Mammary epithelial cell (primary cell): ENCODE measurements at regions of chr9 and their contacts with region 1.

Region 1: DNA sequence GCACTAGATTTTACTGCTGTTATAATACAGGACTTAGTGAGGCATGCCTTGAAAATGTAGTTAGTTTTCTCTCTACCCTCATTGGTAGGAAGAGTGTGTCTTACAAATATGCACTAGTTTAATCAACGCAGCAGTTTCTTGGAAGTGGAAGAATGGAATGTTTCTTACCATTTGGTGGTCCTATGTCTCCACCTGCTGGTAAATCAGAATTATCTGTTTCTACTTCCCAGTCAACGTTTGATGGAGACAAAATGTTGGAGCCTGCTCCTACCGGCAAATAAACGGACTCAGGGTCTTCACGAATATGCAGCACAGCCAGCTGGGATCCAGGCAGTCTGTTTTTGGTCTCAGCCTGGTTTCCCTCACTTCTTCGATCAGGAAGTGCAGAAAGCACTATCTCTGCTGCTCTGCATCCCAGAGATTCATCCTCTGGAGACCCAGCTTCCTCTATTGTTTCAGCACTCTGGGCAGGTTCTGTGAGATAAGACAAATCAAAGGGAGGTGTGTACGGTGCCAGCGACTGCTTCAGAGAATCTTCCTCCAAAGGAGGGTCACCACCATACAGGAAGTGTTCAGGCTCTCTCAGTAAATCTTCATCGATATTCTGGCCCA is 59.5 kb upstream of the PCA3 start:
- DNase-seq: peak; percentile 60
- H3K4me3 ChIP-seq: no peak overlapping the region
- H3K27ac ChIP-seq: no peak overlapping the region
- H3K4me1 ChIP-seq: no peaks in the 10 kb centered on the region
- H3K27me3 ChIP-seq: peaks cover 3% of the 10 kb centered on the region
- CTCF ChIP-seq: peak; percentile 52 to 61

Region 2: DNA sequence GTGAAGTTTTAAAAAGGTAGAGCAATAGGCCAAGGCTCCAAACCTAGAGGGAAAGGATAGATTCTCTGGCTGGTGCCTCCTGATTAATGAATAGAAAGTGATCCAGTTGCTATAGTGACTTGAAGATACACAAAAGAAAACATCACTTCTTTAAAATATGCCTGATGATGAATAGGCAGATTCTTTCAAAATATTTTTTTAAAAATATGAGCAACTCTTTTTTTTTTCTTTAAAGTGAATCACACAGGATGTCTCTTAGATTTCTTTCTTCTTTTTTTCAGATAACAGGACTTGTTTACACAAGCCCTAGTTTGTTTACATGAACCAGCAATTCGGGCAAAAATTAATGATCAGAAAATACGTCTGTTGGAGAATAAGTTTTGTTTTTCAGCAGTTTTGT is 434.9 kb before region 1 on chr9:
- CTCF ChIA-PET with region 1: no interaction called
- dilution Hi-C with region 1: no loop called
- in situ Hi-C with region 1: no loop called
- intact Hi-C with region 1: no loop called
- DNase-seq: peak; percentile 54
- H3K4me3 ChIP-seq: no peak overlapping the region
- H3K27ac ChIP-seq: no peak overlapping the region
- H3K4me1 ChIP-seq: no peaks in the 10 kb centered on the region
- H3K27me3 ChIP-seq: no peaks in the 10 kb centered on the region
- CTCF ChIP-seq: no peak

Region 3: GRCh38 chr9:76403352-76403751 is 301.3 kb before region 1 on chr9:
- CTCF ChIA-PET with region 1: no interaction called
- dilution Hi-C with region 1: no loop called
- in situ Hi-C with region 1: no loop called
- intact Hi-C with region 1: loop called (anchors 1 kb)
- DNase-seq: peak; percentile 69
- H3K4me3 ChIP-seq: peak overlapping the region in 2 of 3 experiments; percentile 1 to 17
- H3K27ac ChIP-seq: peak overlapping the region; percentile 1
- H3K4me1 ChIP-seq: peaks cover 3% of the 10 kb centered on the region
- H3K27me3 ChIP-seq: no peaks in the 10 kb centered on the region
- CTCF ChIP-seq: peak; percentile 51 to 60

Region 4: DNA sequence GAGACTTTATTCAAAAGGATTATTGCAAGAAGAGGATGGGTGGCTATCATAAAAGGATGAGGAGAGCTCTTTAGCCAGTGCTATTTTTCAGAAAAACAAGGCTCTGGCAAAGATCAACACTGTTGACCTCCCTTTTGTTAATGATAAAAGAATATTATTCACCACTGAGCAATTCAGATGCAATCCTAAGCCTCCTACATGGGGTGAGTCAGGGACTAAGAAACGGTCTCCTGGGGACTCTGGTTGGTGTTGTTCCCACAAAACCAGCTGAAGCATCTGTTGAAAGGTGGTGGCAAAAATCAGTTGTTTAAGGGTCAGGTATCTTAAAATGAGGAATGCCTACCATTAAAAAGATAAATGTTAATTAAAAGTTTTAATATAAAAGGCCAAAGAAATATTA is 253.5 kb before region 1 on chr9:
- CTCF ChIA-PET with region 1: no interaction called
- dilution Hi-C with region 1: loop called (anchors 25 kb)
- in situ Hi-C with region 1: loop called in 1 of 2 experiments (anchors 5 kb)
- intact Hi-C with region 1: loop called (anchors 1 kb)
- DNase-seq: peak; percentile 57
- H3K4me3 ChIP-seq: no peak overlapping the region
- H3K27ac ChIP-seq: no peak overlapping the region
- H3K4me1 ChIP-seq: peaks cover 13% of the 10 kb centered on the region
- H3K27me3 ChIP-seq: no peaks in the 10 kb centered on the region
- CTCF ChIP-seq: no peak

Region 5: GRCh38 chr9:76624391-76625048 is 80.2 kb before region 1 on chr9:
- CTCF ChIA-PET with region 1: no interaction called
- dilution Hi-C with region 1: no loop called
- in situ Hi-C with region 1: no loop called
- intact Hi-C with region 1: loop called (anchors 10 kb)
- DNase-seq: no peak
- H3K4me3 ChIP-seq: no peak overlapping the region
- H3K27ac ChIP-seq: no peak overlapping the region
- H3K4me1 ChIP-seq: no peaks in the 10 kb centered on the region
- H3K27me3 ChIP-seq: no peaks in the 10 kb centered on the region
- CTCF ChIP-seq: no peak

Region 6: GRCh38 chr9:76658535-76659231 is 46.0 kb before region 1 on chr9:
- CTCF ChIA-PET with region 1: interaction called, 4 read pairs
- dilution Hi-C with region 1: loop called (anchors 5 kb)
- in situ Hi-C with region 1: no loop called
- intact Hi-C with region 1: loop called (anchors 1 kb)
- DNase-seq: peak; percentile 48
- H3K4me3 ChIP-seq: no peak overlapping the region
- H3K27ac ChIP-seq: no peak overlapping the region
- H3K4me1 ChIP-seq: peaks cover 15% of the 10 kb centered on the region
- H3K27me3 ChIP-seq: no peaks in the 10 kb centered on the region
- CTCF ChIP-seq: peak; percentile 76 to 80

Region 7: DNA sequence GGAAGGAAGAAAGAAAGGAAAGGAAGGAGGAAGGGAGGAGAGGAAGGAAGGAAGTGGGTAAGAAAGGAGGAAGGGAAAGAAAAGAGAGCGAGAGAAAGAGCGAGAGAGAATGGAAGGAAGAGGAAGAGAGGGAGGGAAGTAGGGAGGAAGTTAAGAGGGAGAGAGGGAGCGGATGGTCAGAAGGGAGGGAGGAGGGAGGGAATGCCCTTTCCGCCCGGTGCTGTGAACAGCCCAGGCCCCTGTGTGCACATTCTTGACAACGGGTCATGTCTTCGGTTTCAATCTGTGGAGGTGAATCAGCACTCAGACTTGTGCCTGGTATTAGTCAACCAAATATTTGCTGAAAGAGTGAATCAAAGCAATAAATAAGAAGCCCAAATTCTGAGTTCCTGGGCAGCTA is 162.0 kb after region 1 on chr9:
- CTCF ChIA-PET with region 1: no interaction called
- dilution Hi-C with region 1: no loop called
- in situ Hi-C with region 1: no loop called
- intact Hi-C with region 1: no loop called
- DNase-seq: peak; percentile 54
- H3K4me3 ChIP-seq: no peak overlapping the region
- H3K27ac ChIP-seq: no peak overlapping the region
- H3K4me1 ChIP-seq: no peaks in the 10 kb centered on the region
- H3K27me3 ChIP-seq: no peaks in the 10 kb centered on the region
- CTCF ChIP-seq: no peak